Mammary epithelial cell (primary cell): ENCODE measurements at regions of chr6 and their contacts with region 1.

Region 1: GRCh38 chr6:42813906-42814444 is 32.1 kb downstream of the BICRAL start:
- DNase-seq: no peak
- H3K4me3 ChIP-seq: no peak overlapping the region
- H3K27ac ChIP-seq: no peak overlapping the region
- H3K4me1 ChIP-seq: no peaks in the 10 kb centered on the region
- H3K27me3 ChIP-seq: no peaks in the 10 kb centered on the region
- CTCF ChIP-seq: no peak

Region 2: DNA sequence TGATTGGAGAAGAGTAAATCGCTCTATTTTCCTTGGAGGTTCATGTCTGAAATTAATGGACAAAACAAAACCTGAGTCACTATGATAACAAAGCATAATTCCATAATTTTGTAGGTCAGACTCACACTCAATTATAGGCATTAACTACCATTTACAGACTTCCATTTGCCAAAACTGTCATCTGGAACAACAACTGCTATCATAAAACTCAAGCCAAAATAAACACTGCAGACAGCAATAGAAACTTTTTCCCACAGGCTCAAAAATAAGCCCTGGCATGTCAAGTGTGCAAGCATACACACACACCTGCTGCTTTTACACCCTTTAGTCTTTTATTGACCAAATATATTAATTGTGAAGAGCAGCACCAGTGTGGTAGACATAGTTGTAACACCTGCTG is 603.4 kb before region 1 on chr6:
- CTCF ChIA-PET with region 1: no interaction called
- dilution Hi-C with region 1: no loop called
- in situ Hi-C with region 1: no loop called
- intact Hi-C with region 1: no loop called
- DNase-seq: no peak
- H3K4me3 ChIP-seq: no peak overlapping the region
- H3K27ac ChIP-seq: no peak overlapping the region
- H3K4me1 ChIP-seq: peaks cover 1% of the 10 kb centered on the region
- H3K27me3 ChIP-seq: no peaks in the 10 kb centered on the region
- CTCF ChIP-seq: no peak

Region 3: DNA sequence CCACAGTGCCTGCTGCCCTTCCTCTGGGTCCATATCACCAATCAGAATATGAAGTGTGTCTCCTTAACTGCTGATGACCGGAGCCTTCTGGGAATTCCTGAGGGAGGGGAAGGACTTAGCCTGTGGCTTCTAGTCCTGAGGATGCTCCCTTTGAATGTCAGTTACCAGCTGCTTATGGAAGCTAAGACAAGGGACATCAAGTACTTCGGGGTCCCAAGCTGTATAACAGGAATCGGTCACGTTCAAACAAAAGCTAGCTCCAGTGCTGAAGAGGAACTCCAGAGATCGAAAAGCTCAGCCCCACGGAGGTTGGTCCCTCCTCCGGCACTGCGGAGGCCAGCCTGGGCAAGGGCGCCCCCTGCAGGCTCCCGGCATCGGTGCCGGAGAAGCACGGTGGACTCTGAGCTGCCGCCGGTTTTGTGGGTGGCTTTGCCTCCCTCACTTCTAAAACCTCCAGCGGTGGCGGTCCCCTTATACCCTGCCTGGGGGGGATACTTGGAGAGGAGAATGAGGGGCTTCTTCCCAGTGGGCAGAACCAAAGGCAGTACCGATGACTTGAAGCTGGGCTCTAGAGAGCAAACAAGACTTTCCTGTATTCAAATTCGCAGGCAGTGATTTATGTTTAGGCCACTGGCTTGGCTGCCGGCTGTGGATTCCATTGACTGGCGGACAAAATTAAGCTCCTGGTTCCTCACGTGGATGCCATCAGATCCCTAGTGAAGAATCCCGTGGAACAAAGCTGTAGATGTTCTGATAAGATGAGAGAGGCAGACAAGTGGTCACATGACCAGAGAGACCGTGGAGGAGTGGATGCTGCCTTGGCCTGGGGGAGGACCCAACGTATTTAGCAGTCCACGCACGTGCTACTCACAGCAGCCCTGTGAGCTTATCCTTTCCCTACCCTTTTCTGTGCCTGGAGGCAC is 266.3 kb before region 1 on chr6:
- CTCF ChIA-PET with region 1: no interaction called
- dilution Hi-C with region 1: no loop called
- in situ Hi-C with region 1: no loop called
- intact Hi-C with region 1: no loop called
- DNase-seq: peak; percentile 56
- H3K4me3 ChIP-seq: peak overlapping the region; percentile 51 to 57 (median 54)
- H3K27ac ChIP-seq: no peak overlapping the region
- H3K4me1 ChIP-seq: peaks cover 6% of the 10 kb centered on the region
- H3K27me3 ChIP-seq: no peaks in the 10 kb centered on the region
- CTCF ChIP-seq: peak; percentile 86 to 99

Region 4: DNA sequence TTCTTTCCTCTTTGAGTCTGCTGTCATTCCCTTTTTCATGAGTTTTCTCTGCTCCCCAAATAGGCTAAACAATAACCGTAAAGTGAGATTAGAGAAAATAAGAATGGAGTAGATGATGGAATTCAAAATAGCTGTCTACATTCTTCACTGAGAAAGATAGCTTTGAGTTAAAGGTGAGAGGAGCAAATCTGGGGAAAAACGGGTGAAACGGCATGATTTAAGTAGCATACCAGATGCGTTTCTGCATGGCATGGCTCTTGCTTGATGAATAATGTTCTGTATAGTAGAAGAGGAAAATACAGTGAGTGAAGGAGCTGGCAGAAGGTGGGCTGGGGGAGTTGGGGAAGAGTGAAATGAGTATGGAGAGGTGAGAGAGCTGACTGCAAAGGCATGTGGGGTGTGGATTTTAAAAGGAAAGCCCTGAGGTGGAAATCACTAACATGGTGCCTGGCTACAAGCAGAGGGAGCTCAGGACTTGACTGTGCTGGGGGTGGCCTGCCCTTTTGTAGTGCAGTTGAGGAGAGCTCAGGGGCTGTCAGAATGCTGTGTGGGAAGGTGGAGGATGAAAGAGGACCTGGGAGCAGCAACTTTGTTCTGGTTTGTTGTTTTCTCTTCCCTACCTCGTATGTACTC is 23.3 kb before region 1 on chr6:
- CTCF ChIA-PET with region 1: no interaction called
- dilution Hi-C with region 1: no loop called
- in situ Hi-C with region 1: no loop called
- intact Hi-C with region 1: no loop called
- DNase-seq: no peak
- H3K4me3 ChIP-seq: no peak overlapping the region
- H3K27ac ChIP-seq: no peak overlapping the region
- H3K4me1 ChIP-seq: peaks cover 2% of the 10 kb centered on the region
- H3K27me3 ChIP-seq: no peaks in the 10 kb centered on the region
- CTCF ChIP-seq: no peak

Region 5: GRCh38 chr6:42851599-42851998 is 37.6 kb after region 1 on chr6:
- CTCF ChIA-PET with region 1: no interaction called
- dilution Hi-C with region 1: loop called (anchors 5 kb)
- in situ Hi-C with region 1: no loop called
- intact Hi-C with region 1: no loop called
- DNase-seq: no peak
- H3K4me3 ChIP-seq: no peak overlapping the region
- H3K27ac ChIP-seq: no peak overlapping the region
- H3K4me1 ChIP-seq: no peaks in the 10 kb centered on the region
- H3K27me3 ChIP-seq: no peaks in the 10 kb centered on the region
- CTCF ChIP-seq: no peak

Region 6: DNA sequence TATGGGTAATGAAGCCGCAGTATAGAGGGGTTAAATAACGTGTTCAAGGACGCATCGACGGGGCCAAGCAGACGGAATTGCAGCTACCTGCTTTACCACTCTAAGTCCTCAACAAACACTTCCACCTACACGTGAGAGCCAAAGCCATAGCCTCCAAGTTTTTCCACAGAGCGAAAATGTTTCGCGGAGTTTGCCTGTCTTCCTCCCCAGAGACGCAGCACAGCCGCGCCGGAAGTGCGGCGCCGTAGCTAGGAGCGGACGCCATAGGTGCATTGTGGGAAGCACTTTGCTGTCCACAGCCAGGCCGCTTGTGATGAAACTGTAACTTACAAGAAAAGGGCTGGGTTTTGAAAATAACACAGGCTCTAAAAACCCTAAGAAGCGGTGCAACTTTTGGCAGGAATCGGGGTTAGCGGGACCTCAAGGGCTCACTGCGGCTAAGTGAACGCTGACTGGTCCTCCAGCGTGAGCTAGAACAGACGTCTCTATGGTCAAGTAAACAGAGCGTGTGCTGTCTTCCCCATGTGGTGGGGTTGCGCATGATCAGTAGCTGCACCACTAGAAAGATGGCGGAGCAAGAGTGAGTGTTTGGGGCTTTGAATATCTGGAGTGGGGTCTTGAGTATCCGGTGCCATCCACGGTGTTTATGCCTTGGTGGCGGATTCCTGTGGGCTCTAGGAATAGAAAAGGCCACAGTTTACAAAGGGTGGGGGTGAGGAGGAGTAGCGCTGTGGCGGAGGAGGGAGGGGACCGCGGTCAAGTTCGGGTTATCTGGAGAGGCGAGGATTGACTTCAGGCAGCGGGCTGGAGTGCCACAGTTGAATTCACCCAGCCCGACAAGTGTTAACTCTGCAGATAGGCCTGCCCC is 65.6 kb after region 1 on chr6 and contains the start of gene RPL7L1:
- CTCF ChIA-PET with region 1: no interaction called
- dilution Hi-C with region 1: no loop called
- in situ Hi-C with region 1: no loop called
- intact Hi-C with region 1: no loop called
- DNase-seq: peak; percentile 89
- H3K4me3 ChIP-seq: peak within 1 kb of the TSS; percentile 87 to 100 (median 93)
- H3K27ac ChIP-seq: peak within 1 kb of the TSS; percentile 83
- H3K4me1 ChIP-seq: peaks cover 6% of the 10 kb centered on the region
- H3K27me3 ChIP-seq: no peaks in the 10 kb centered on the region
- CTCF ChIP-seq: no peak
- total RNA-seq, gene RPL7L1: 102 to 106 TPM